ENCODE measurements at regions of chr11 and their contacts with region 1.

Region 1: DNA sequence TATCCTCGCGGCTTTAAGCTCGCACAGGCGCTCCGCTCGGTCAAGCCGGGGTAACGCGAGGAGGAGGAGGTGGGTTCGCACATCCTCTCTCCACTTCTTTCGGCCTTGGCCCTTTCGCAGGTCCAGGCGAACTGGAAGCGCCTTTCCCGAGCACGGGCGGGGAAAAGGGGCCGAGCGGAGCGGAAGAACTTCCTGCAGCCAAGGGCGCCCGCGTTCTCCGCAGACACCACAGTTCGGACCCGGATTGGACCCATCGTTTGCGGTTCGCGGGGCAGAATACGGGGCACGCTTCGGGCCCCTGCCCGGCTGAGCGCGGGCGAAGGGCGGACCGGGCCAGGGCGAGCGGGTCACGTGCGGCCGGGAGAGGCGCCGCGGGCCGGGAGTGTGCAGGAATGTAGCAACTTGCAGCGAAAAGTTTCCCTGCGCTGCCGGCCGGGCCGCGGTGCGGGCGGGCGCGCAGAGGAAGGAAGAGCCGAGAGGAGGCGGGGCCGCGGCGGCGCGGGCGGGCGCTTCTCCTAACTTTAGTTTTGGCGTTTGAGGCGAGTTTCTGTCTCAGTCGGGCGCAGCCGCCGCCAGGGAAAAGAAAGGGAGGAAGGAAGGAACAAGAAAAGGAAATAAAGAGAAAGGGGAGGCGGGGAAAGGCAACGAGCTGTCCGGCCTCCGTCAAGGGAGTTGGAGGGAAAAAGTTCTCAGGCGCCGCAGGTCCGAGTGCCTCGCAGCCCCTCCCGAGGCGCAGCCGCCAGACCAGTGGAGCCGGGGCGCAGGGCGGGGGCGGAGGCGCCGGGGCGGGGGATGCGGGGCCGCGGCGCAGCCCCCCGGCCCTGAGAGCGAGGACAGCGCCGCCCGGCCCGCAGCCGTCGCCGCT is at the start of gene YAP1:
- DNase-seq: peak; percentile 90
- H3K4me3 Mint-ChIP-seq: peak within 1 kb of the TSS; percentile 98
- H3K27ac Mint-ChIP-seq: peak within 1 kb of the TSS; percentile 76
- H3K4me1 Mint-ChIP-seq: peaks cover 8% of the 10 kb centered on the region
- H3K27me3 Mint-ChIP-seq: peaks cover 50% of the 10 kb centered on the region
- total RNA-seq, gene YAP1: not detected in 2 replicates

Region 2: GRCh38 chr11:101835506-101836063 is 274.5 kb before region 1 on chr11:
- intact Hi-C with region 1: no loop called
- DNase-seq: no peak
- H3K4me3 Mint-ChIP-seq: no peak overlapping the region
- H3K27ac Mint-ChIP-seq: no peak overlapping the region
- H3K4me1 Mint-ChIP-seq: no peaks in the 10 kb centered on the region
- H3K27me3 Mint-ChIP-seq: no peaks in the 10 kb centered on the region

Region 3: GRCh38 chr11:101914738-101915426 is 195.2 kb before region 1 on chr11 and contains the start of gene CEP126:
- intact Hi-C with region 1: loop called (anchors 2 kb)
- DNase-seq: peak; percentile 98
- H3K4me3 Mint-ChIP-seq: peak within 1 kb of the TSS; percentile 91
- H3K27ac Mint-ChIP-seq: peak within 1 kb of the TSS; percentile 86
- H3K4me1 Mint-ChIP-seq: peaks cover 10% of the 10 kb centered on the region
- H3K27me3 Mint-ChIP-seq: no peaks in the 10 kb centered on the region
- total RNA-seq, gene CEP126: 0.72 and 0.90 TPM in 2 replicates

Region 4: DNA sequence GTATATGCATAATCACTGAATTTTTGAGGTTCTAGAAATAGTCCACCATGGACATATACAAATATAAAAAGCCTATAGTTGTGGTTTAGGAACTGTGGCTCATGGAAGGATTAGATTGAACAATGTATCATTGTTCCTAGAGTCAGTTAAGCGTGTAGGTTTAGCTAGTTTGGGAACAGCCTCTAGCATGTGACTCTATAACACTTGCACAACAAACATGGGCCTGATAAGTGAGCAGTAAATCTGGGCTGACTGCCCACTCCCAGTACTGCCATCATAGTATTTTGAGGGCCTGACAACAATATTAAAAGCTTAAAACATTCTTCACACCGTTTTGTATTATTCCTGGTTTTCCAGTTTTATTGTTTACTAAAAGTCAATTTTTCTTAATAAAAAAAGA is 47.1 kb after region 1 on chr11:
- intact Hi-C with region 1: no loop called
- DNase-seq: no peak
- H3K4me3 Mint-ChIP-seq: no peak overlapping the region
- H3K27ac Mint-ChIP-seq: no peak overlapping the region
- H3K4me1 Mint-ChIP-seq: no peaks in the 10 kb centered on the region
- H3K27me3 Mint-ChIP-seq: peaks cover 12% of the 10 kb centered on the region

Region 5: GRCh38 chr11:102268329-102269193 is 158.4 kb after region 1 on chr11:
- intact Hi-C with region 1: loop called (anchors 10 kb)
- DNase-seq: peak; percentile 88
- H3K4me3 Mint-ChIP-seq: peak overlapping the region; percentile 78
- H3K27ac Mint-ChIP-seq: no peak overlapping the region
- H3K4me1 Mint-ChIP-seq: peaks cover 25% of the 10 kb centered on the region
- H3K27me3 Mint-ChIP-seq: peaks cover 46% of the 10 kb centered on the region

Measured in activated CD4-positive, alpha-beta T cell treated with anti-CD3 and anti-CD28 coated beads, Interleukin-2, amount 10 ng/mL, durations not matched to agents 24 days and 14 days (primary cell).